WTC11 (cell line): ENCODE measurements at regions of chr18 and their contacts with region 1.

Region 1: GRCh38 chr18:37778417-37779165 is 213.0 kb upstream of the CELF4 start:
- DNase-seq: peak; percentile 93
- ATAC-seq: peak; percentile 94
- H3K4me3 Mint-ChIP-seq: no peak overlapping the region
- H3K27ac Mint-ChIP-seq: no peak overlapping the region
- H3K4me1 Mint-ChIP-seq: no peaks in the 10 kb centered on the region
- H3K27me3 Mint-ChIP-seq: no peaks in the 10 kb centered on the region; the same call in 1 of the 2 replicates
- CTCF ChIP-seq: peak; percentile 87

Region 2: DNA sequence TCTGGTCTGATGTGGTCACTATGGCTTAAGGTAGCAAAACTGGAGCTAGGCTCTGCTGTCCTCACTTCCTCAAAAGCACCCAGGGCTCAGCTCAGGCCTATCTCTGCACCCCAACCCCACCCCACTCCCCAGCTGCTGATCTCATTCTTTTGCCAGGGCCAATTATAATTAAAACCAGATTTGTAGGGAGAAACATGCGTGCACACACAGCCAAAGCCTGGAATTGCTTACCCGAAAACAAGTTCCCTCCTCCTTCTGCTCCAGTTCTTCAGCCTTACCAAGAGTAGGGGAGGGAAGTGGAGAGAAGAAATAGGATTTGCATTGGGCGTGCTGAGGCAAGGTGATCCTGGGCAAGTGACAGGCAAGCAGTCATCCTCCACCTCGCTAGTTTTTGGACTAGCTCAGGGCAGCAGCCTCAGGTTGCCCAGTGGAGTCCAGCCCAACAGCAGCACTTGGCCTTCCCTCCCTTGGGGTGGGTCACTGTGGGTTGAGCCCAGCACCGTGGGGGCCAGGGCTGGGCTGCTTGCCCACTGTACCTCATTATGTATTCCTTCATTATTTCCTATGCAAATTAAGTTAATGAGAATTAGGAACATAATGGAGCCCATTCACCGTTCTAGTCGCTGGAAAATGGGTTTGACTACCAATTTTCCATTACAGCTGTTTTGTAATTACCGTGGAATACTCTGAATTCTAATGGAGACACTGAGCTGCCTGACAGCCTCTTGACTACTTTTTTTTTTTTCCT is 13.9 kb before region 1 on chr18:
- CTCF ChIA-PET with region 1: interaction called, 11 read pairs
- POLR2A ChIA-PET with region 1: no interaction called
- DNase-seq: no peak
- ATAC-seq: peak; percentile 20
- H3K4me3 Mint-ChIP-seq: no peak overlapping the region
- H3K27ac Mint-ChIP-seq: no peak overlapping the region
- H3K4me1 Mint-ChIP-seq: 0 out of 2 replicates have a peak, but pooled peaks cover 5% of the 10 kb centered on the region
- H3K27me3 Mint-ChIP-seq: no peaks in the 10 kb centered on the region; the same call in 1 of the 2 replicates
- CTCF ChIP-seq: no peak

Region 3: DNA sequence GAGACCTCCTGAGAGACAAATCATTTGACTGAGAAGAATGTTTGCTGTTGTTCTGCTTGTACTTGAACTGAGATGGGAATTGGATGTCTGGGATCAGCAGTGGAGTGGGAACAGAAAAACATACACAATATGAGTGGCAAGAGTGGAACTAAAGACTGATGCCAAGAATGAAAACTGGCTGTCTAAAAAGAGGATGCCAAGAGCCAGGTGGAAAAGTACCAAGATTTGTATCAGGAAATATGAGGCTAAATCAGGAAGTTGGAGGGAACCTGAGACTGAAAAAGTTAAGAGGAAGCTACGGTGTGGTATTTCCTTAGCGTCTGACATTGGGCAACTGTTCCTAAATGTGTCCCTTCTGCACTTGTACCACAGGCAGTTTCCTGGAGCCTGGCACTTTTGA is 227.9 kb after region 1 on chr18:
- CTCF ChIA-PET with region 1: interaction called, 10 read pairs
- POLR2A ChIA-PET with region 1: no interaction called
- DNase-seq: no peak
- ATAC-seq: no peak
- H3K4me3 Mint-ChIP-seq: no peak overlapping the region
- H3K27ac Mint-ChIP-seq: no peak overlapping the region
- H3K4me1 Mint-ChIP-seq: peaks cover 26% of the 10 kb centered on the region
- H3K27me3 Mint-ChIP-seq: no peaks in the 10 kb centered on the region
- CTCF ChIP-seq: no peak